ENCODE measurements at regions of chr13 and their contacts with region 1.

Region 1: GRCh38 chr13:77599351-77599750 is 63.8 kb downstream of the SCEL start:
- DNase-seq: no peak
- ATAC-seq: no peak
- H3K4me3 ChIP-seq: no peak overlapping the region
- H3K27ac ChIP-seq: no peak overlapping the region
- H3K4me1 ChIP-seq: no peaks in the 10 kb centered on the region
- H3K27me3 ChIP-seq: no peaks in the 10 kb centered on the region
- CTCF ChIP-seq: no peak

Region 2: DNA sequence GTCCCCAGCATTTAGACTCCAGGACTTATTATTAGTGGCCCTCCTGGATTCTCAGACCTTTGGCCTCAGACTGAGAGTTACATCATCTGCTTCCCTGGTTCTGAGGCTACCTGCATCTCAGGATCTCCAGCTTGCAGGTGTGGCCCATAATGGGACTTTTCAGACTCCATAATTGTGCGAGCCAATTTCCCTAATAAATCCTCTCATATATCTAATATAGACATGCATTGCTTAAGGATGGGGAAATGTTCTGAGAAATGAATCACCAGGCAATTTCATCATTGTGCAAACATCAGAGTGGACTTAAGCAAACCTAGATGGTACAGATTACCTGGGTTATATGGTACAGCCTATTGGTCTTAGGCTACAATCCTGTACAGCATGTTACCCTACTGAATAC is 455.9 kb before region 1 on chr13:
- intact Hi-C with region 1: no loop called
- DNase-seq: no peak
- ATAC-seq: peak in 1 of 2 donors; percentile 23
- H3K4me3 ChIP-seq: no peak overlapping the region
- H3K27ac ChIP-seq: no peak overlapping the region
- H3K4me1 ChIP-seq: no peaks in the 10 kb centered on the region
- H3K27me3 ChIP-seq: no peaks in the 10 kb centered on the region
- CTCF ChIP-seq: no peak

Region 3: GRCh38 chr13:77740931-77741596 is 141.7 kb after region 1 on chr13:
- intact Hi-C with region 1: loop called (anchors 10 kb)
- DNase-seq: no peak
- ATAC-seq: no peak
- H3K4me3 ChIP-seq: no peak overlapping the region
- H3K27ac ChIP-seq: no peak overlapping the region
- H3K4me1 ChIP-seq: no peaks in the 10 kb centered on the region
- H3K27me3 ChIP-seq: no peaks in the 10 kb centered on the region
- CTCF ChIP-seq: no peak